ENCODE measurements at regions of chr11 and their contacts with region 1.

Region 1: GRCh38 chr11:69699213-69699612 is 4.6 kb downstream of the FGF19 start:
- DNase-seq: no peak

Region 2: GRCh38 chr11:69881449-69882269 is 182.4 kb after region 1 on chr11:
- intact Hi-C with region 1: loop called (anchors 5 kb)
- DNase-seq: no peak

Measured in head of caudate nucleus (tissue), 42 donors.